CD4-positive, alpha-beta memory T cell (primary cell): ENCODE measurements at regions of chr22 and their contacts with region 1.

Region 1: GRCh38 chr22:30196141-30196879 is 50.2 kb downstream of the LIF start:
- DNase-seq: peak; percentile 32 to 83 (median 54)
- H3K4me3 ChIP-seq: peak overlapping the region in 1 of 2 donors; percentile 7
- H3K4me3 Mint-ChIP-seq: peak overlapping the region in 7 of 8 donors; percentile 59 to 86 (median 76)
- H3K27ac ChIP-seq: peak overlapping the region; percentile 32
- H3K27ac Mint-ChIP-seq: peak overlapping the region; percentile 73 to 88 (median 87)
- H3K4me1 ChIP-seq: peaks cover 43% of the 10 kb centered on the region
- H3K4me1 Mint-ChIP-seq: peaks cover 28 to 48% (median 39%) of the 10 kb centered on the region in 4 donors
- H3K27me3 ChIP-seq: no peaks in the 10 kb centered on the region
- H3K27me3 Mint-ChIP-seq: no peaks in the 10 kb centered on the region

Region 2: DNA sequence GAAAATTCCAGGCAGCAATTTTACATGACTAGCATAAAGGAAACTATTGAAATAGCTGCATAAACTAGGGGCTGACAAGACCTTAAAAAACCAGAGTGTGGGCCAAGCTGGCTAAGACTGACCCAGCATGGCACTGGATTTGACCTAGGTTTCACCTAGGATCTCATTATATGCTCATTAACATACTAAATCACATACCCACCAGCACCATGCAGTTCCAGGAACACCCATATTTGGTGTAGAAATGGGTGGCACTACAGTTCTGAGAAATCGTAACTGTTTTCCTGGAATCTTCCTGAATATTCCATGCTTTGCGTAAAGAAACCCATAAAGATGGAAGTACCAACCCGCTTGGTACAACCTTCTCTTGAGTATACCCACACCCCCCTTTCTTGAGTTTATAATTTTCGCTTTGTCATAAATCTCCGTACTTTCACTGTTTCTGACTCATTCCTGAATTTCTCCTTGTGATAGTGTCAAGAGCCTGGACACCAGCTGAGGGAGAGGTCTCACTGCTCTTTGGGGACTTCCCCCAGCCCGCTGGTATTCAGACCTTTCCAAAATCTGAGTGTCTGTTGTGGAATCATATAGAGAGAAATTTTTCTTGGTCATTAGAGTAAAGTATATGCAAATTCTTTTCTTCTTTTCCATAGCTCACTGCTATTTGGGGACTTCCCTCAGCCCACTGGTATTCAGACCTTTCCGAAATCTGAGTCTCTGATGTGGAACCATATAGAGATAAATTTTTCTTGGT is 258.2 kb before region 1 on chr22:
- CTCF ChIA-PET with region 1: no interaction called
- POLR2A ChIA-PET with region 1: no interaction called
- intact Hi-C with region 1: no loop called
- DNase-seq: no peak
- H3K4me3 ChIP-seq: no peak overlapping the region
- H3K4me3 Mint-ChIP-seq: peak overlapping the region in 1 of 8 donors; percentile 74
- H3K27ac ChIP-seq: no peak overlapping the region
- H3K27ac Mint-ChIP-seq: peak overlapping the region in 1 of 7 donors; percentile 82
- H3K4me1 ChIP-seq: no peaks in the 10 kb centered on the region
- H3K4me1 Mint-ChIP-seq: peaks cover 33 to 50% (median 34%) of the 10 kb centered on the region in 4 donors
- H3K27me3 ChIP-seq: no peaks in the 10 kb centered on the region
- H3K27me3 Mint-ChIP-seq: no peaks in the 10 kb centered on the region

Region 3: GRCh38 chr22:30183861-30184278 is 12.4 kb before region 1 on chr22:
- CTCF ChIA-PET with region 1: interaction called, 5 read pairs
- POLR2A ChIA-PET with region 1: interaction called, 4 read pairs
- intact Hi-C with region 1: loop called (anchors 1 kb)
- DNase-seq: no peak
- H3K4me3 ChIP-seq: no peak overlapping the region
- H3K4me3 Mint-ChIP-seq: peak overlapping the region in 1 of 8 donors; percentile 13
- H3K27ac ChIP-seq: no peak overlapping the region
- H3K27ac Mint-ChIP-seq: peak overlapping the region in 4 of 7 donors; percentile 12 to 47 (median 34)
- H3K4me1 ChIP-seq: peaks cover 72% of the 10 kb centered on the region
- H3K4me1 Mint-ChIP-seq: peaks cover 36 to 78% (median 50%) of the 10 kb centered on the region in 4 donors
- H3K27me3 ChIP-seq: no peaks in the 10 kb centered on the region
- H3K27me3 Mint-ChIP-seq: no peaks in the 10 kb centered on the region

Region 4: DNA sequence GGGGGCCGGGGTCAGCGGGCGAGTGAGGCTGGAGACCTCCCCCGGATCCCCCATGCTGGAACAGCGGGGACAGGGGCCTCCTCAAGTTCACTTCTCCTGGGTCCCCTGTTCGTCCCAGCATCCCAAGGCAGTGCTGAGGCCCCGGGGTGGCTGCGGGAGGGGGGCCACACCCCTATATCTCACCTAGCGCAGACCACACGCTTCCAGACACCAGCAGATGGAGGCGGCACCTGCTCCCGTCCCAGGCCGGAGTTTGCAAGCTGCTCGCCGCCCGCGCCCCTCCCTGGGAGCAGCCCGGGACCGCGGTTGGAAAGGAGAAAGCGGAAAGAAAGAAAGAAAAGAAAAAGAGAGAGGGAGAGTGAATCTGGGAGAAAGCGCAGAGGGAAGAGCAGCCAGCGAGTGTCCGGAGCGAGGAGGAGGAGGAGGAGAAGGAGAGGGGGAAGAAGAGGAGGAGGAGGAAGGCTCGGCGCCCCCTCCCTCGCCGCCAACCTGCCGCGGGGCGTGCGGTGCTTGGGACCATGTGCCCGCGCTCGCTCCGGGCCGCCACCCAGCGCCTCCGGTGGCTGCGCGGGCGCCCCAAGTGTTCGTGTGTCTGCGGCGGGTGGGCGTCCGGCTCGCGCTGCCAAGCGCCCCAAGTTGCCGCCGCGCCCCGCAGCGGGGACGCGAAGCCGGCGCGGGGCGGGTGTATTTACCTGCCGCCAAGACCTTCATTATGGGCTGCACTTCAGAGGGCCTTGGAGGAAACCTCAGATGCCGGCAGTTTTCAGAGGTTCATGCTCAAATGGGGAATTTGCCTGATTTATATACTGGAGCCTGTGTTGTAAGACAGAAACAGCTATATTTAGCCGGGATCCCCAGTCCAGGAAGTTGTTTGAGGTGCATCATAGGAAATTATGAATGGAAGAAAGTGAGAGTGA is 49.9 kb after region 1 on chr22 and contains the start of gene LIF:
- CTCF ChIA-PET with region 1: no interaction called
- POLR2A ChIA-PET with region 1: no interaction called
- intact Hi-C with region 1: loop called (anchors 5 kb)
- DNase-seq: peak; percentile 42 to 57 (median 53)
- H3K4me3 ChIP-seq: peak within 1 kb of the TSS; percentile 42 to 69
- H3K4me3 Mint-ChIP-seq: peak within 1 kb of the TSS; percentile 84 to 98 (median 88)
- H3K27ac ChIP-seq: peak within 1 kb of the TSS; percentile 15
- H3K27ac Mint-ChIP-seq: peak within 1 kb of the TSS in 5 of 7 donors; percentile 45 to 86 (median 67)
- H3K4me1 ChIP-seq: peaks cover 43% of the 10 kb centered on the region
- H3K4me1 Mint-ChIP-seq: peaks cover 30 to 66% (median 42%) of the 10 kb centered on the region in 4 donors
- H3K27me3 ChIP-seq: no peaks in the 10 kb centered on the region
- H3K27me3 Mint-ChIP-seq: peaks cover 2 to 8% of the 10 kb centered on the region in 2 donors
- total RNA-seq, gene LIF: 0.26 to 0.58 TPM

Region 5: DNA sequence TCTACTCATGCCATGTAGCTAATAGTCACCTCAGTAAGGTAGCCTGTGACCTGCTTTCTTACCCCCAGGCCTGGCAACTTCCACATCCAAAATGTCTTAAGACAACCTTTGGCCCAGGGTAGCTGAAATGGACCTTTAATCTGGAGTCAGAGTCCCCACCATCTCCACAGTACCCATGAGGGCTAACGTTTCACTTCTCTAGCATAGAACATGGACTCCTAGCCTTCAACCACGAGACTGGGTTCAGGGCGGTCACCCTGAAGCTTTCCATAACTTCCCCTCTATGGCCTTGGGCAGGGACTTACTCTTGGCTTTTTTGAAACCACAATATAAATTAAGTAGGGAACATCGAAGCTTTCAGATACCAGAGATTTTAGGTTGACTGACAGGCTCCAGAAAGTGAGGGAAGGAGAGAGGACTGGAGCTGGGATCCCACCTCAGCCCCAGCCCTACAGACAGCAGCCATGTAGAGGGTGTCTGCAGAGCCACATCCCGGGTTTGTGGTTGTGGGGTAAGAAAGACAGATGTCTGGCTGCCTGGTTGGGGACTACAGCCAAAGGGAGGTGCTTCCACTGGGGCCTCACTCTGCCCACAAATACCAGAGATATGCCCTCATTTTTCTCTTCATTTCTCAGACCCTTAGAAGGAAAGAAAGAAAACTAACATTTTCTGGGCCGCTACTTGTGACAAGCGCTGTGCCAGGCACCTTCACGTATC is 127.9 kb after region 1 on chr22:
- CTCF ChIA-PET with region 1: no interaction called
- POLR2A ChIA-PET with region 1: no interaction called
- intact Hi-C with region 1: no loop called
- DNase-seq: peak; percentile 42 to 68 (median 50)
- H3K4me3 ChIP-seq: peak overlapping the region in 1 of 2 donors; percentile 76
- H3K4me3 Mint-ChIP-seq: peak overlapping the region; percentile 90 to 95 (median 93)
- H3K27ac ChIP-seq: peak overlapping the region; percentile 59
- H3K27ac Mint-ChIP-seq: peak overlapping the region; percentile 51 to 95 (median 89)
- H3K4me1 ChIP-seq: peaks cover 76% of the 10 kb centered on the region
- H3K4me1 Mint-ChIP-seq: peaks cover 57 to 80% (median 68%) of the 10 kb centered on the region in 4 donors
- H3K27me3 ChIP-seq: no peaks in the 10 kb centered on the region
- H3K27me3 Mint-ChIP-seq: no peaks in the 10 kb centered on the region